ENCODE measurements at regions of chr2 and their contacts with region 1.

Region 1: GRCh38 chr2:208929139-208929864 is 494.5 kb upstream of the MAP2 start:
- DNase-seq: peak in 1 of 2 experiments; percentile 6
- H3K4me3 ChIP-seq: no peak overlapping the region
- H3K27ac ChIP-seq: no peak overlapping the region
- H3K4me1 ChIP-seq: no peaks in the 10 kb centered on the region
- H3K27me3 ChIP-seq: no peaks in the 10 kb centered on the region
- CTCF ChIP-seq: no peak

Region 2: DNA sequence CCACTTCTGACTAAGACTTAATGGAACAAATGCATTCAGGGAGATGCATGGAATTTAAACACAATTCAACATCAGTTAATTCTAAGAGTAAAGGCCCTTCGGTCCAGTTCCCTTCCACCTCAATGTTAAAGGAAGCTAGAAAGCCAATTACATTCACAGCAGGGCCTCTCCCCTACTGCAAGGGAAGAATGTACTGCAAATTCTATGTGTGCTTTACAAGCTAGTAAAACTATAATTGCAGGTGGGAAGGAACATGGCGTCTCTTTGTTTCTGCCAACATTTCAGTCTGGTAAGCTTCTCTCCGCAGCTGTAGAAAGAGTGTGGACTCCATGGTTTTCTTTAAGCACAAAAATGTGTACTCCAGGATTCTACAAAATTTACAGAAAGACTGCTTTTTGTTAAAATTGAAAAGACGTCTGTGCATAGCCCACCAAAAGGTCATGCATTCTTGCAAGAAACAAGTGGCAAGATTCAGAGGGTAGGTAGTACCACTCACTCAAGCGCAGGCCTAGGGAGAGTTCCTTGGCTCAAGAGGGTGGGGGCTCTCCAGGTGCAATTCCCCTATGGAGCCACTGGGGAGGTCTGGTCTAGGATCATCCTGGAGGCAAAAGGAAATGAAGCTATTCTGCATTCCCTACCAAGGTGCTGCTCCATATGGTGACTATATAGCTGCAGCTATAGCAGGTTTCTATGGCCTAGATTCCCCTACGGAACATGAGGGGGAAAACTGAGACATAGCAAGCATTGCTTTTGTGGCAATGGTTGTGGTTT is 1032.6 kb before region 1 on chr2:
- CTCF ChIA-PET with region 1: no interaction called
- POLR2A ChIA-PET with region 1: no interaction called
- intact Hi-C with region 1: no loop called
- DNase-seq: no peak
- H3K4me3 ChIP-seq: no peak overlapping the region
- H3K27ac ChIP-seq: no peak overlapping the region
- H3K4me1 ChIP-seq: no peaks in the 10 kb centered on the region
- H3K27me3 ChIP-seq: no peaks in the 10 kb centered on the region
- CTCF ChIP-seq: no peak

Region 3: DNA sequence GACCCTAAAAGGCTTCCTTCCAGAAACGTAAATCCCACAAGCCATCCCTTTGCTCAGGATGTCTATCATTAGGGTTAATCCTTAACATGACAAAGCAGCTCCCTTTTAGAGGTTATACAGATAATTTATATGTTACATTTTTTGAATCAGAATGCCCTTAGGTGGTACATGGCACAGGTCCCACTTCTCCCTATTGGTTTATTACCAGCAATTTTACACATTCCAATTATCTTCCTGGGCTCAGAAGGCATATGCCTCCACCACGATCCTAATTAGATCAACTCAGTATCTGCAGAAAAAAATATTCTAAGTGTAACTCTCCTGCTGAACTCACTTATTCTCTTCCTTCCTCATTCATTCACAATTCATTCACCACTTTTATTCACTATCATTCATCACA is 12.4 kb before region 1 on chr2:
- CTCF ChIA-PET with region 1: no interaction called
- POLR2A ChIA-PET with region 1: no interaction called
- intact Hi-C with region 1: no loop called
- DNase-seq: no peak
- H3K4me3 ChIP-seq: no peak overlapping the region
- H3K27ac ChIP-seq: no peak overlapping the region
- H3K4me1 ChIP-seq: no peaks in the 10 kb centered on the region
- H3K27me3 ChIP-seq: no peaks in the 10 kb centered on the region
- CTCF ChIP-seq: no peak

Region 4: DNA sequence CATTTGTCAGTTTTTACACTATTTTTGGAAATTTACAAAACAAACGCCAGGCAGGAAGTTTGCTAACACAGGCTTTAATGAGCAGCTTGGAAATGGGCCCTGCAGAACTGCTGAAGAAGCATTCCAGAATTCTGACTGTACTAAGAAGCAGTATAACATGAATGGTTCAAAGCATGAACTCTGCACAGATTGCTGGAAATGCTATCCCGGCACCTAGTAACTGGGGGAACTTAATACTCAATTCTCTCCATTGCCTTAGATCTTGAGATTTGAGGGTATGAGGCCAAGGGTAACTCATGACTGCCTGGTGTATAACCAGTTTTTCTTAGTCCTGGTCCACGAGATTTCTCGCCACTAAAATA is 55.4 kb after region 1 on chr2:
- CTCF ChIA-PET with region 1: no interaction called
- POLR2A ChIA-PET with region 1: no interaction called
- intact Hi-C with region 1: loop called (anchors 2 kb)
- DNase-seq: peak; percentile 33 to 59
- H3K4me3 ChIP-seq: no peak overlapping the region
- H3K27ac ChIP-seq: no peak overlapping the region
- H3K4me1 ChIP-seq: peaks cover 11% of the 10 kb centered on the region; the same call in 1 of the 2 replicates
- H3K27me3 ChIP-seq: no peaks in the 10 kb centered on the region
- CTCF ChIP-seq: no peak

Region 5: GRCh38 chr2:209049608-209050007 is 120.3 kb after region 1 on chr2:
- CTCF ChIA-PET with region 1: no interaction called
- POLR2A ChIA-PET with region 1: no interaction called
- intact Hi-C with region 1: no loop called
- DNase-seq: no peak
- H3K4me3 ChIP-seq: no peak overlapping the region
- H3K27ac ChIP-seq: no peak overlapping the region
- H3K4me1 ChIP-seq: no peaks in the 10 kb centered on the region
- H3K27me3 ChIP-seq: no peaks in the 10 kb centered on the region
- CTCF ChIP-seq: no peak

Region 6: DNA sequence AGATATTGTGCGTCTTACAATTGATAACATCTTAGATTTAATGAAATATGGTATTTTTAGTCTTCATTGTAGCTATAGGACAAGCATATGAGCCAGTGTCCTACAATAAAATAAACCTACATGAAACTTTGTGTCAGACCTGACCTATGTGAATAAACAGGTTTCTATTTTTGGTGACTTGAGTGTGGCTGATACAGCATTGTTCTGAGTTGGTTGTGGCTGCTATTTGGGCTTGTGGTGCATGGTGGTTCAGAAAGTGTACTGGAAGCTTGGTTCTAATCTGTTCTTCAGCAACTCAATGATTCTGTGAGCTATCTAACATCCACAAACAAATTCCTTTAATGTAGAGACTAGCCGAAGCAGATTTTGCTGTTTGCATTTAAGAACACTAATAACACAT is 429.7 kb after region 1 on chr2:
- CTCF ChIA-PET with region 1: no interaction called
- POLR2A ChIA-PET with region 1: no interaction called
- intact Hi-C with region 1: no loop called
- DNase-seq: no peak
- H3K4me3 ChIP-seq: no peak overlapping the region
- H3K27ac ChIP-seq: no peak overlapping the region
- H3K4me1 ChIP-seq: no peaks in the 10 kb centered on the region
- H3K27me3 ChIP-seq: no peaks in the 10 kb centered on the region
- CTCF ChIP-seq: no peak

Measured in PC-9 (cell line).